ENCODE measurements at regions of chr4 and their contacts with region 1.

Region 1: DNA sequence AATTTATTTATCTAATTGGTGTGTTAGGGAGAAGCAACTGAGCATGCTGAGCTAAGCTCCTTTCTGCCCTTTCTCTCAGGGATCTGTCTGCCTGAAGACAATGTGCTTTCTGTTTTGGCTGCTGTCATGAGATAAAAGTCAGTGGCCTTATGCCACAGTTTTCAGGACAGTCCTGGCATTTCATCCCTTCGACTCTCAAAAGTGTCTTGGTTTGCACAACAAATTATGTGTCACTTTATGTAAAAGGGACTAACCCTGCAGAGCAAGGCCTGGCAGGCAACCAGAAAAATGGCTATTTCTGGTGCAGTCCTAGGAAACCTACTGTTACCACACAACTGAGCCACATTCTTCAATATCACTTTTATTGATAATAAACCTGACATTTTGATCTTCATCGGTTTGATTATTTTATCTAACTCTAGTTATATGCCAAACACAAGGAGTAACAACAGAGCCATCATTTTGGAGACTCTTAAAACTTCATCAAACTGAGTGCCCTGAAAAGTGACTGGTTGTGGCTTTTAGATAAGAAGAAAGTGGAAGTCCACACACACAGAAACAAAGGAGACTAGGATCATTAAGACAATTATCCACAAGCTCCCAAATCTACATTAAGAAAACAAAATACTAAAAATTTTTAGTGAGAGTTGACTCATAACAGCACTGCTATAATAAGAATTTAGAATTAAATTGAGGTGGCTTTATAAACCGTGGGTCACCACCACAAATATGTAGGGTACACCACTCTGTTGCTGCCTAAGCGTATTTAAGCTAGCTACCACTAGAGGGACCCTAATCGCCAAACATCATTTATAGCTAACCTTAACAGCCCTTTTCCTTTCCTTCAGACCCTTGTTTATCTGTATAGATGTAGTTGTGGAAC is 95.9 kb upstream of the PTPN13 start:
- DNase-seq: peak; percentile 34 to 52 (median 47)
- ATAC-seq: peak; percentile 91
- H3K4me3 ChIP-seq: no peak overlapping the region
- H3K27ac ChIP-seq: no peak overlapping the region
- H3K4me1 ChIP-seq: no peaks in the 10 kb centered on the region
- H3K27me3 ChIP-seq: no peaks in the 10 kb centered on the region
- CTCF ChIP-seq: peak; percentile 49 to 72 (median 62)
- EP300 ChIP-seq: no peak
- POLR2A ChIP-seq: no peak
- RAD21 ChIP-seq: peak; percentile 35 to 52; a peak in 3 of 4 replicates

Region 2: DNA sequence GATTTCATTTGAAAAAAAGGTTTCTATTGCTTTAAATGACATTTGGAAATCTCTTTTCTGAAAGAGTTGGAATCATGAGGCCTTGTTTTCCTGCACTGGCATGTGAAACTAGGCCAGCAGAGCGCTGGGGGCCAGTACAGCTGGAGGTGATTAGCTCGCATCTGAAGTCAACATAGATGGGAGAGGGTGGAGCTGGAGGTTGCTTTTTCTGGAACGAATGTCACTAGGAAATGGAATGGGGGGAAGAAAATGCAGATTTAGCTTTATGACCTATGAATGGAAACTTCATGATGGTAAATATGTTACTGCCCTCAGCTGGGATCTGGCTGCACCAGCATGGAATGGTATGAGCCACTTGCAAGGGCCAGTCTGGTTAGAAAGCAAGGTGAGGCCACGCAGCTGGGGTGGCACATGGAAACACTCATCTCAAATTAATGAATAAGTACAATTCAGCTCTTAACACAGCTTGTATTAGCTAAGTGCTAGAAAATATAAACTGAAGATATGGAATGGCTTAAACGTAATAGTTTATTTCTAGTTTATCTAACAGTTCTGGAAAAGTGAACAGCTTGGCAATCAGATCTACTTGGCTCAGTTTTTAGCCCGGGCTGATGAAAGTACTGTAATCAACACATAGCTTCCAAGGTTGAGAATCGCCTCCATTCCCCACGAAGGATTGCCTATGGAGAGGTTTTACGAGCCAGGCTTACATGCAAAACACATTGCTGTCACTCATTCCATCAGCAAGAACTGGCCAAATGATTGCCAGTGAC is 318.5 kb after region 1 on chr4:
- CTCF ChIA-PET with region 1: no interaction called
- POLR2A ChIA-PET with region 1: no interaction called
- in situ Hi-C with region 1: no loop called
- intact Hi-C with region 1: loop called (anchors 5 kb)
- DNase-seq: no peak
- ATAC-seq: no peak
- H3K4me3 ChIP-seq: no peak overlapping the region
- H3K27ac ChIP-seq: no peak overlapping the region
- H3K4me1 ChIP-seq: no peaks in the 10 kb centered on the region
- H3K27me3 ChIP-seq: peaks cover 0 to 5% of the 10 kb centered on the region in 2 experiments; a peak in 2 of 5 replicates
- CTCF ChIP-seq: no peak
- EP300 ChIP-seq: no peak
- POLR2A ChIP-seq: no peak
- RAD21 ChIP-seq: no peak

Measured in K562 (cell line).